Prostate gland (tissue), 2 donors: ENCODE measurements at regions of chr2 and their contacts with region 1.

Region 1: GRCh38 chr2:237923481-237924163 is 43.2 kb upstream of the UBE2F start:
- DNase-seq: peak; percentile 23
- H3K4me3 ChIP-seq: peak overlapping the region in 1 of 2 donors; percentile 18
- H3K27ac ChIP-seq: peak overlapping the region in 1 of 2 donors; percentile 38
- H3K4me1 ChIP-seq: no peaks in the 10 kb centered on the region
- H3K27me3 ChIP-seq: no peaks in the 10 kb centered on the region
- CTCF ChIP-seq: peak; percentile 79 to 93 (median 86)
- POLR2A ChIP-seq: no peak

Region 2: DNA sequence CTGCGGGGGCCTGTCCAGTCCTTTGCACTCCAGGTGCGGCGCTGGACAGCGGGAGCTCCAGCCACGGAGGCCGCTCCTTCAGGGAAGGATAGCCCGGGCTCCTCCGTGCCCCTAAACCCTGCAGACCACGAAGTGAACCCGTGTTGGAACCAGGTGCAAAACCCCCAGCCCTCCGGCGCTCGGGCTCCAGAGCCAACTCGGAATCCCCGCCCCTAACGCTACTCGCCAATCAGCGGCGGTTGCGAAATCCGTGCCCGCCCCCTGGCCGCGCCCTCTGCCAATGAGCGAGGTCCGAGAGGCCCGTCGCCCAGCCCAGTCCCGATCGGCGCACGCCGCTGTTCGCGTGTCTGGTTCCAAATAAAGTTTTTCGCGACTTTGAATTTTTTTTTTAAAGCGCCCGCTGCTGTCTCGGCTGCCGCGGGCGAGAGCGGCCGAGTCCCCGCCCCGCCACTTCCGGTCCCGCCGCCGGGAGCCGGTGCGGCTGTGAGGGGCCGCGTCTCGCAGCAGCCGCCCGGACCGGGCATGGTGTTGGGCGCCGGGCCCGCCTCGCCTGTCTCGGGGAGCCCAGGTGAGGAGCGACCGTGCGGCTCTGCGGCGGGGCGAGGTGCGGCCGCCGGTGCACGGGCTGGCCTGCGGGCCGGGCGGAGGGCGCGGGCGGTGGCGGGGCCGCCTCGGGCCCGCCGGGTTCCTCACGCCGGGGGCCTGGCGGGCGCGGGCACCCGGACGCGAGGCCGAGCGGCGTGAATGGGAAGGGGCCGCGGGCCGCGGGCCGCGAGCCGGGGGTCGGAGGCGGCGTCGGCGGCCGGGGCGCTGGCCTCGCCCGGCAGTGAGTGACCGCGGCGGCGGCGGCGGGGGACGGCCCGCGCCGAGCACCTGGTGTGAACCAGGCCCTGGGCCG is 43.2 kb after region 1 on chr2 and contains the start of gene UBE2F:
- intact Hi-C with region 1: loop called (anchors 5 kb)
- DNase-seq: peak; percentile 97
- H3K4me3 ChIP-seq: peak within 1 kb of the TSS; percentile 46 to 61
- H3K27ac ChIP-seq: peak within 1 kb of the TSS; percentile 10 to 47
- H3K4me1 ChIP-seq: peaks cover 11% of the 10 kb centered on the region
- H3K27me3 ChIP-seq: no peaks in the 10 kb centered on the region
- CTCF ChIP-seq: peak in 1 of 4 experiments; percentile 19
- POLR2A ChIP-seq: peak; percentile 67
- total RNA-seq, gene UBE2F: 45.2 to 73.2 TPM

Region 3: DNA sequence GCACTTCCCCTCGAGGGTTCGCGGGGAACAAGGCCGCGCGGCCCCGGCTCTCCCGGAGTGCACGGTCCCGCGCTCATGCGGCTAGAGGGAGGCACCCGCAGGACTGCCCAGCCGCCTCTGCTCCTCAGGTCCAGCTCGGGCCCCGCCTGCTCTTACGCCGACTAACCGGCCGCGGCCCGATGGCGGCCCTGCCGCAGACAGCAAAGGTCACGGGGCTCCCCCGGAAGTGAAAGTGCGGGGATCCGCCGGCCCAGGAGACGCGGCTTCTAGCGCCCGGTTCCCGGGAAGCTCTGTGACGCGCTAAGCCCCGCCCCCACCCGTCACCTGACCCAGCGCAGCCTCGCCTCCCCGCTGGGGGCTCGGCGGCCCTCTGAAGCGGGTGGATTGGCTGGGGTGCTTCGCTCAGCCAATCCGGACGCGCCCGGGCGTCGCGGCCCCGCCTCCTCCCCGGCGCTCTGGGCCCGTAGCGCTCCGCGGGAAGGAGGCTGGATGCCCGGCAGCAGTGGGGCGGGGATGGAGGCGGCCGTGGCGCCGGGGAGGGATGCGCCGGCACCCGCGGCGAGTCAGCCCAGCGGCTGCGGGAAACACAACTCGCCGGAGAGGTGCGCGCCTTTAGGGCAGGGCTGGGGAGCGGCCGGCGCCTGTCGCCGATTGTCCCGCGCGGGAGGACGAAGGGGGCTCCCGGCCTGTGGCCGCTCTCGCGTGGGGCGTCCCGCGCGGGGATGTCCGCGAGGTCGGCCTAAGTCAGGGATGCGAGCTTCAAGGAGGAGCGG is 137.1 kb after region 1 on chr2 and contains the start of gene SCLY:
- intact Hi-C with region 1: loop called (anchors 5 kb)
- DNase-seq: peak; percentile 96
- H3K4me3 ChIP-seq: peak within 1 kb of the TSS; percentile 88 to 92
- H3K27ac ChIP-seq: peak within 1 kb of the TSS; percentile 86
- H3K4me1 ChIP-seq: peaks cover 4% of the 10 kb centered on the region
- H3K27me3 ChIP-seq: no peaks in the 10 kb centered on the region
- CTCF ChIP-seq: peak in 1 of 4 experiments; percentile 39
- POLR2A ChIP-seq: peak; percentile 73
- total RNA-seq, gene SCLY: 11.5 to 16.1 TPM